Activated CD4-positive, alpha-beta T cell treated with anti-CD3 and anti-CD28 coated beads, Interleukin-2, amount 10 ng/mL, durations not matched to agents 24 days and 14 days (primary cell): ENCODE measurements at regions of chr10 and their contacts with region 1.

Region 1: DNA sequence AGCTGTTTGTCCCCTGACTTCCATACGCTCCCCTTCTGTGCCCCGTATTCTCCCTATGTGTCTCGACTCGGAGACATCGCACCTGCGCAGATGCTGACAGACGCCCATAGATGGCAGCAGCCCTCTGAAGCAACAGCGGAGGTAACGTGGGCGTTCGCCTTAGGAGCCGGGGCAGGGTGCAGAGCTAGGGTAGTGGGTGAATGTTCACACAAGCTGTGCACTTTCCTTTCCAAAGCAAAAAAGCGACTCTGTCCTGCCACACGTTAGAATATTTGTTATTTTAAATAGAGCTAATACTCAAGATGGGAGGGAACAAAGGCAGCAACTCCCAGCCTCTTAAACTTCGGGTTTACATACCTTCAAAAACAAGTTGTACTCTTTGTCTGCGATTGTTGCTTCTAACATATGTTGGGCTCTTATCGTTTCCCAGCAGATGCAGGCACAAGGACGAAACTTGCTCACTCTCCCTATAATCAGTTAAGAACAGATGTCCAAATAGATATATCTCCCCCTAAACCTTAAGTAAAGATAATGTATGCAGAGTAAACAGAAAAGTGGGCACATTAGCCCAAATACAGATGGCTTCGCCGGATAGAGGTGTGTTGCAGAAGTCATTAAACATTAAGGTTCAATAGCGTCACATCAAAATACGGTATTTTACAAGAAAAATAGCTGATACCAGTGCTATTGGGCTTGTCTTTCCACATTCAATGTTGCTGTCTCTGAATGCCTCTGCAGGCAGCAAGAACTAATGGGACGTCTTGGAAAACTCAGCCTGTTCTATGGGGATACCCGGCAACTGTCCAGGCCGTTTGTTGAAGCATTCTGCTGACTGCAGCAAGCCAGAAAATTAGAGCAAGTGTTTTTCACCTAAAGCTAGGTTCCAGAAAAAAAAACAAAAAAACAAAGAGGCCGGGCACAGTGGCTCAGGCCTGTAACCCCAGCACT is 340.3 kb upstream of the PRKCQ start:
- DNase-seq: peak; percentile 93
- H3K4me3 Mint-ChIP-seq: no peak overlapping the region
- H3K27ac Mint-ChIP-seq: no peak overlapping the region
- H3K4me1 Mint-ChIP-seq: peaks cover 22% of the 10 kb centered on the region
- H3K27me3 Mint-ChIP-seq: peaks cover 6% of the 10 kb centered on the region

Region 2: GRCh38 chr10:6936931-6937330 is 16.6 kb after region 1 on chr10:
- intact Hi-C with region 1: no loop called
- DNase-seq: no peak
- H3K4me3 Mint-ChIP-seq: no peak overlapping the region
- H3K27ac Mint-ChIP-seq: no peak overlapping the region
- H3K4me1 Mint-ChIP-seq: no peaks in the 10 kb centered on the region
- H3K27me3 Mint-ChIP-seq: peaks cover 23% of the 10 kb centered on the region

Region 3: GRCh38 chr10:6973899-6974298 is 53.6 kb after region 1 on chr10:
- intact Hi-C with region 1: no loop called
- DNase-seq: peak; percentile 76
- H3K4me3 Mint-ChIP-seq: peak overlapping the region; percentile 53
- H3K27ac Mint-ChIP-seq: peak overlapping the region; percentile 9
- H3K4me1 Mint-ChIP-seq: peaks cover 13% of the 10 kb centered on the region
- H3K27me3 Mint-ChIP-seq: peaks cover 22% of the 10 kb centered on the region

Region 4: DNA sequence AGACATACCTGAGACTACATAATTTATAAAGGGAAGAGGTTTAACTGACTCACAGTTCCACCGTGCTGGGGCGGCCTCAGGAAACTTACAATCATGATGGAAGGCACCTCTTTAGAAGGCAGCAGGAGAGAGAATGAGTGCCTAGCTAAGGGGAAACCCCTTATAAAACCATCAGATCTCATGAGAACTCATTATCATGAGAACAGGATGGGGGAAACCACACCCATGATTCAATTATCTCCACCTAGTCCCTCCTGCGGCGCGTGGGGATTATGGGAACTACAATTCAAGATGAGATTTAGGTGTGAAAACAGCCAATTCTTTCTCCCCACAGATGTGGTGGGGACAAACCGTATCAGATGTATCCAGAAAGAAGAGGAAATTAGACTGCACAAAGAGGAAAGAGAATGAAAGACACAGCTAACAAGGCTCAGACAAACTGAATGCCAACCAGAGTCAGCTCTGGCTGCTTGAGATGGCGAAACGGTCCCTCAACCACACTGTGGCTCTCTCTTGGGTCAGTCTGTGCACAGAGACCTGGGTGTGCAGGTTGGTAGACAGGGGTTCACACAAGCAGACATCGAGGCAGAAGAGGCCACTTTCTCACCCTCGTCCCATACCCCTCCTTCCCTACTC is 114.9 kb after region 1 on chr10:
- intact Hi-C with region 1: loop called (anchors 10 kb)
- DNase-seq: no peak
- H3K4me3 Mint-ChIP-seq: no peak overlapping the region
- H3K27ac Mint-ChIP-seq: peak overlapping the region; percentile 7
- H3K4me1 Mint-ChIP-seq: peaks cover 22% of the 10 kb centered on the region
- H3K27me3 Mint-ChIP-seq: no peaks in the 10 kb centered on the region

Region 5: GRCh38 chr10:7121154-7121810 is 200.9 kb after region 1 on chr10:
- intact Hi-C with region 1: loop called (anchors 1 kb)
- DNase-seq: peak; percentile 90
- H3K4me3 Mint-ChIP-seq: no peak overlapping the region
- H3K27ac Mint-ChIP-seq: no peak overlapping the region
- H3K4me1 Mint-ChIP-seq: peaks cover 4% of the 10 kb centered on the region
- H3K27me3 Mint-ChIP-seq: peaks cover 44% of the 10 kb centered on the region

Region 6: DNA sequence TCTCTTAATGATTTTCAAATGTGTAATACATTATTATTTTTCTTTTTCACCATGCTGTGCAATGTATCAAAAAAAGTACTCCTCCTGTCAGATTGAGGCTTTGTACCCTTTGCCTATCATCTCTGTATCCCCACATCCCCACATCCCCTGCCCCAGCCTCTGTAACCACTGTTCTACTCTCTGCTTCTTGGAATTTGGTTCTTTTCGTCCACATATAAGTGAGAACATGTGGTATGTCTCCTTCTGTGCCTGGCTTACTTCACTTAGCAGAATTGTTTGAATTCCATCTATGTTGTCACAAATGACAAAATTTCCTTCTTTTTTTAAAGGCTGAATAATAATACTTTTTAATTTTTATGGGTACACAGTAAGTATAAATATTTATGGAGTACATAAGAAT is 911.7 kb after region 1 on chr10:
- intact Hi-C with region 1: no loop called
- DNase-seq: no peak
- H3K4me3 Mint-ChIP-seq: no peak overlapping the region
- H3K27ac Mint-ChIP-seq: no peak overlapping the region
- H3K4me1 Mint-ChIP-seq: peaks cover 7% of the 10 kb centered on the region
- H3K27me3 Mint-ChIP-seq: no peaks in the 10 kb centered on the region